ENCODE measurements at regions of chr9 and their contacts with region 1.

Region 1: DNA sequence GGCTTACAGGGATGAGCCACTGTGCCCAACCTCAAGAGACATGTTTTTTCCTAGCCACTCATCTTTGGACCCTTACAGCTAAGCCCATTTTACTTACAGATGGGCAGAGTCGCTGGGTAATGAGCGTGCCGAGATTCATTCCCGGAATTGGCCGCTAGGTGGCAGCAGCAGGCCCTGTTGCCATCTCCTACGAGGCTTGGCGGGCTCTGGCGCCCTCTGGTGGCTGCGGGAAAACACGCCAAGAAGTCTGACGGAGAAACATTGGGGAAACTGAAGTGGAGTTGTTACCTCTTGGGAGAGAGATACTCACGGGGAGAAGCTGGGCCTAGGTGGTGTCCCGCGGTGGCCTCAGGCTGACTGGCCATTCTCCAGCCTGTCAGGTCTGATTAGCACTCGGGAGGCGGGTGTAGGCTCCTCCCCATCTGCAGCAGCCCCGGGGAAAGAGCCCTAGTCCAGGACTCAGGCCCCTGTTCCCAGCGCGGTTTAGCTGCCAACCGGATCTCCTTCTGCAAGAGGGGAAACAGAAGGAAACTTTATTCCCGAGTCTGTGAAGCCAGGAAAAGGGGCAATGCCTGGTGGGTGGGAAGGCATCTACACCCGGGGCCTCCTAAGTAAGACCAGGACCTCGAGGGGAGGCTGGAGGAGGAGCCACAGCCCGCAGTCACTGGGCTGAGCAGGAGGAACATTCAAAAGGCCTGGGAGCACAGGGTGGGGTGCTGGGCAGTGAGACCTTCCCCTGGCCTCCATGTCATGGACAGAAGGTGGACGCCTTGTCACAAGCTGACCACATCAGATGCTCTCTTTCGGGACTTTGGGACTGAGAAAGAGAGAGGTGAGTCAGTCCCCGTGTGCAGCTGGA is 9.7 kb downstream of the PTGES2 start:
- DNase-seq: peak; percentile 73
- H3K4me3 ChIP-seq: no peak overlapping the region
- H3K27ac ChIP-seq: no peak overlapping the region
- H3K27me3 ChIP-seq: no peaks in the 10 kb centered on the region
- CTCF ChIP-seq: peak; percentile 100

Region 2: DNA sequence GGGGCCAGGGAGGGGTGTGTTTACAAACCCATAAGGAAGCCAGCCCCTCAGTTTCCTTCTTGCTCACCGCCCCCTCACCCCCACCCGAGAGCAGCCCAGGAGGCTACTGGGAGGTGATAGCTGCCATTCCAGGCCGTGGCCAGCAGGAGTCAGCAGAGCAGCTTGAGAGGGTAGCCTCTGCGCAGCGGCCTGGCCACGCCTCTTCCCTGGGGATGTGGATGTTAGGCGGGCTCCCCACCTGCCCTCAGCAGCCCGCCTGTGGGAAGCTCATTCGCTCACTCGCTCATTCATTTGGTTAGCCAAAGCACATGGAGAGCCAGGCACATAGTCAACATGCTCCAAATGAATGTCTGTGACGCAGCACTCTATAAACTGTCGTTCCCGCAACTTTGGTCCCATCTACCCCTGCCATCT is 174.1 kb before region 1 on chr9:
- CTCF ChIA-PET with region 1: interaction called, 85 read pairs
- POLR2A ChIA-PET with region 1: no interaction called
- DNase-seq: no peak
- H3K4me3 ChIP-seq: no peak overlapping the region
- H3K27ac ChIP-seq: no peak overlapping the region
- H3K27me3 ChIP-seq: no peaks in the 10 kb centered on the region
- CTCF ChIP-seq: peak; percentile 96

Region 3: DNA sequence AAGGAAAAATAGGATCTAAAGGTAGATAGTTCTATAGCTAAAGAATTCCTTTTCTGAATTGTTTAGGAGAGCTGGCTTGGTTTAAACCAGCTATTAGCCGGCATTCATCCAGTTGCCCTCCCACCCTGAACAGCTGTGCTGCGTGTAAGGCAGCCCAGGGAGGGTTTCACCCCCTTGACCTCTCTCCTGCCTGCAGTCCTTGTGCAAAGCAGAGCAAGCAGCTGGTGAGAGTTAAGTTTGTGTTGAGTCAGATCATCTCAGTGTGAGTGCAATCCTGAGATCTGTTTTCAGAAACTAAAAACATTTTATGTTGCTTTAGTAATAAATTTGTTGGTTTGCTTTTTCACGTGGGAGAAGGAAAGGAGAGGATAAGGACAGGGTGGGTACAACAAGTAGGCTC is 36.8 kb before region 1 on chr9:
- CTCF ChIA-PET with region 1: interaction called, 11 read pairs
- POLR2A ChIA-PET with region 1: no interaction called
- DNase-seq: peak; percentile 96
- H3K4me3 ChIP-seq: no peak overlapping the region
- H3K27ac ChIP-seq: peak overlapping the region; percentile 93
- H3K27me3 ChIP-seq: no peaks in the 10 kb centered on the region
- CTCF ChIP-seq: no peak

Region 4: DNA sequence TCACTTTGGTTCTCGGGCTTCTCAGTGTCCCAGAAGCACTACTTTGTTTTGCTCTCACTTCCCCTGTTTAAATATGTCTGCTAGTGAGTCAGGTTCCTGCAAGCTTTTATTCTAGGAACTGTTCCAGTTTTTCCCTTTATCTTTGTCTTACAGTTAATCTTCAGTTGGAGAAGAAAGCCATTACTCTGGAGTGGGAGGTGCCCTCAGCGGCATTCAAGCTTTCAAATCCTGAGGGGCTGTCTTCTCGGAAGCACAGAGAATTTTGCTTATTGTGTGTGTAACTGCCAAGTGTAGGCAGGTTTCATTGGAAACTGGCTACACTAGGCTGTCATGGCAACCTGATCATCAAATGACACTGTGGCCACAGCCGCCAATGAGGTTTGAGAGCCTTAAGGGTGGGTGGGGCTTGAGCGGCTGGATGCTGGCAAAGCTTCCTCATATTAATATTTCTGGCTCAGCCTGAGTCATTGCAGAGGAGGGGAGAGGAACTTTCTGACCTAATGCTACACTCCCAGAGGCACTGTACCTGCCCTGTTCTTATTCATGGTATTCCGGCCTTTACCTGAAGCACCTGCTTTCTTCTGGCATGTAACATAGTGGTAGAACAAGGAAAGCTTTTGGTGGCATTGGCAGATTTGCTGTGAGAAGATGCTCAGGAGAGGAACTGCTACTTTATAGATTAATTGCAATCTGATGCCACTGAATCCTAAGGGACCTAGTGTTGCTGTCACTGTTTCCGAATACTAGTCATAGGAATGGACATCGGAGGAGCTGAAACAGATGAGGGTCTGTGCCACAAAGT is 23.5 kb before region 1 on chr9:
- CTCF ChIA-PET with region 1: interaction called, 102 read pairs
- POLR2A ChIA-PET with region 1: interaction called, 3 read pairs
- DNase-seq: peak; percentile 89
- H3K4me3 ChIP-seq: peak overlapping the region; percentile 42
- H3K27ac ChIP-seq: peak overlapping the region; percentile 84
- H3K27me3 ChIP-seq: no peaks in the 10 kb centered on the region
- CTCF ChIP-seq: no peak

Region 5: GRCh38 chr9:128153947-128154725 is 36.3 kb after region 1 on chr9:
- CTCF ChIA-PET with region 1: interaction called, 10 read pairs
- POLR2A ChIA-PET with region 1: no interaction called
- DNase-seq: no peak
- H3K4me3 ChIP-seq: no peak overlapping the region
- H3K27ac ChIP-seq: no peak overlapping the region
- H3K27me3 ChIP-seq: peaks cover 5% of the 10 kb centered on the region
- CTCF ChIP-seq: no peak